Mammary epithelial cell (primary cell): ENCODE measurements at regions of chr18 and their contacts with region 1.

Region 1: GRCh38 chr18:56844556-56844955 is 193.4 kb downstream of the WDR7 start:
- DNase-seq: no peak
- H3K4me3 ChIP-seq: no peak overlapping the region
- H3K27ac ChIP-seq: no peak overlapping the region
- H3K4me1 ChIP-seq: no peaks in the 10 kb centered on the region
- H3K27me3 ChIP-seq: no peaks in the 10 kb centered on the region
- CTCF ChIP-seq: no peak

Region 2: DNA sequence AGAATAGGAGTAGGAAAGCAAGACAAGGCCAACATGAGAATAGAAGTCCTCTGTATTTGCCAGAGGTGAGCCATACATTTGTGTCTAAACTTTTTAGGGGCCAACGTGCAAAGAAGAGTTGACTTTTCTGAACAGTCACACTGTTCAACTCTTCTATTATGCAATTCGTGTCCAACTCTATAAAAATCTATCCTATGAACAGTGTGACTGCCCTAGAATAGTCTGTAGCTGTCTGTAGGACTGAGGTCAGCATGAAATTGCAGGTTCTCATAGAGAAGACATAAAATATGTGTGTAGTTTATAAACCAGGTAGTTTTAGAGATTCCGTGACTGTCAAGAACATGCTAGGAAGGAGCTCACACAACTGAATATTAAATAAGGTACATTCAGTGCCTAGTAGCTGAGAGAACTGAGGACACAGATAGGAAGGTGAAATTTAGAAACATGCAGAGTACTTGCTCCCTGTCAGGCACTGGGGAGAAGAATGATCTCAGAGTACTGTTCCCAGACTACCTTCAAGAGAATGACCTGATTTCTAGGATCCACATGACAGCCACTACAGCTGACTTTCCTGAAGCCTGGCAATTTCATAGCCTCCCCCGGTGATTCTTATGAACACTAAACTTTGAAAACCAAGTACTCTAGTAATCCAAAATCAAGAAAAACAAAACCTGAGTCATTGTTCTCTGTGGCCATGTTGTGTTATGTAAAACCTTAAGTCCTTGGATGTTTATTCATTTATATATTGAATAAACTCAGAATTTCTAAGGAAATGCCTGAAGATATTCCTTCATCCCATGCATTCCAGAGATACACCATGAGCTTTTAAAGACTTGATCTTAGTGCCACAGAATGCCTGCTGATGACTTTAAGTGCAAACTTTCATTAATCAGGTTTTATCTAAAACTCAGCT is 100.9 kb after region 1 on chr18:
- CTCF ChIA-PET with region 1: no interaction called
- dilution Hi-C with region 1: loop called (anchors 10 kb)
- in situ Hi-C with region 1: no loop called
- intact Hi-C with region 1: no loop called
- DNase-seq: no peak
- H3K4me3 ChIP-seq: no peak overlapping the region
- H3K27ac ChIP-seq: no peak overlapping the region
- H3K4me1 ChIP-seq: no peaks in the 10 kb centered on the region
- H3K27me3 ChIP-seq: no peaks in the 10 kb centered on the region
- CTCF ChIP-seq: no peak